Ascending aorta (tissue), 2 donors: ENCODE measurements at regions of chr10 and their contacts with region 1.

Region 1: DNA sequence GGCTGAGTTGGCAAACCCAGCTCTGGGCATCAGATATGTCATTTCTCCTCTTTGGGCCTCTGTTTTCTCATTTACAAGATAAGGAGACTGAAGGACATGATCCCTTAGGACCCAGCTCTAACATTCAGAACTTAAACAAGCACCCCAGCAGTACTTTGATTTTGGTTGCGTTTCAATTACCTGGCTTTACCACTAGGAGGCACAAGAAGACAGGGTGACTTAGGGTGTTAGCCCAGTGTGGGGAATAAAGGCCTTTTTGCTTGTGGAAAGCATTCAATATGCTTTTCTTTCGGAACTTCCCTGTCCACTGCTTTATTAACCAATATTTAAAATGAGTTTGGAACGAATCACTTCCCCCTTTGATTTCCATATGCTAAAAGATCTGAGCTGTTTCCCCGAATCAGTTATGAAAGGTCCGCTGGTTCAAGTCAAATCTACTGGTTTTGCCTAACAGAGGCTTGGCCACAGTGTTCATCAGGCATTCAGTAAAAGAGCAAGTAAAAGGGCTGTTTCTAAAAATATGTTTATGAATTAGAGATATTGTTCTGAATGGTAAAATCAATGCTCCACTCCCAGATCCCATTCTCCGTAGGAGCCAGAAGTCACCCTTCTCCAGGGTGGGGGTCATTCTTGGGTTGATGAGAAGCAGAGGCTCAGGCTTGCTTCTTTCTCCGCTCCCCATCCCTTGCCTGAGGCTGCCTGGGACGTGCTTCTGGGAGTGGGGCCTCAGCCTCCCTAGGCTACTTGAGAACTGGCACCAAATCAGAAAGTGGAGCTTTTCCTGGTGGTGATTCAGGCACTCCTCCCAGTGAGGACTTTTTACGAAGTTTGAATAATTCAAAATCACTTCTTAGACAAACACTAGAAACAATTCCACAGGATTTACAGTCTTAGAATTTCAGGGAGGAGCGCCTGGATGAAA is 105.5 kb downstream of the MYOF start:
- DNase-seq: peak in 1 of 2 donors; percentile 82
- H3K4me3 ChIP-seq: peak overlapping the region in 1 of 2 donors; percentile 39
- H3K27ac ChIP-seq: peak overlapping the region; percentile 78 to 92
- H3K4me1 ChIP-seq: peaks cover 4 to 26% of the 10 kb centered on the region in 2 donors
- H3K27me3 ChIP-seq: no peaks in the 10 kb centered on the region
- CTCF ChIP-seq: peak; percentile 91 to 96 (median 96)

Region 2: GRCh38 chr10:93074147-93074596 is 302.5 kb before region 1 on chr10:
- intact Hi-C with region 1: no loop called
- DNase-seq: no peak
- H3K4me3 ChIP-seq: peak overlapping the region; percentile 47 to 66
- H3K27ac ChIP-seq: no peak overlapping the region
- H3K4me1 ChIP-seq: peaks cover 13 to 28% of the 10 kb centered on the region in 2 donors
- H3K27me3 ChIP-seq: peaks cover 15% of the 10 kb centered on the region
- CTCF ChIP-seq: no peak

Region 3: GRCh38 chr10:93420091-93420490 is 43.5 kb after region 1 on chr10:
- intact Hi-C with region 1: loop called (anchors 1 kb)
- DNase-seq: no peak
- H3K4me3 ChIP-seq: no peak overlapping the region
- H3K27ac ChIP-seq: peak overlapping the region; percentile 72 to 82
- H3K4me1 ChIP-seq: peaks cover 18 to 33% of the 10 kb centered on the region in 2 donors
- H3K27me3 ChIP-seq: no peaks in the 10 kb centered on the region
- CTCF ChIP-seq: no peak

Region 4: DNA sequence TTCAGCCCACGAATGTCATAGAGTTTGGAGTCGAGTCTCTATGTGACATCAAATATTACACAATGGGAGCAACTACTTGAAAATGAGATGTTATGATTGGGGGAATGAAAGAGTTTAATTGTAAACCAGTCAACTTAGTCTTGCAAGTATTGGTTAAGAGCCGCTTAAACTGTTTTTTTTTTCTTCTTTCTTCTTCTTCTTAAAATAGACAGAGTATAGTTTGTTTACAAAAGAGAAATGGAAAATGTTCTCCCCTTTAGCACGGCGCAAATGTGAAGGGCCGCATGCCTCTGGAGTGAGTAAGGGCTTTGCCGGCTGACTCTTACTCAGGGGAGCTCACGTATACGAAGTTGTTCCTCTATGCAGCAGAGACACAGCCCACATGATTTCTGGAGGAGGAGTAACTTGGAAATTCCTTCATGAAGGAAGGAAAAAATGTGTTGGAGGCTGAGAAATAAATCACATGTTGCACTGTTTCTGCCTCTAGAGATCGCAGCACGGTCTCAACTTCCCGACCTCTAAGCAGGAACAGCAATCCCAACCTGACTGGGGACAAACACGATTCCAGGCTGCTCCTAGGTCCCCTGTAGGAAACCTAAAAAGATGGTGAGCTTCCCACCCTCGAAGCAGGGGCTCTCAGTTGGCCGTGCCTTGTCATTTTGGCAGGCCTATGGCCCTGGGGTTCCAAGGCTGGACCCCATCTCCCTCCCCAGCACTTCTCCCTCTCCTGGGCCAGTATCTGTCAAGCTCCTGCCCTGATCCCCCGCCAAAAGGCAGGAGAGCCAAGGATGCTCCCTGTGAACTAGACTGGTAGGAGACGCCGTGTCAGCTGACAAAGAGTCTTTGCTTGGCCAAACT is 60.7 kb after region 1 on chr10:
- intact Hi-C with region 1: loop called (anchors 2 kb)
- DNase-seq: peak; percentile 72 to 96
- H3K4me3 ChIP-seq: peak overlapping the region; percentile 29 to 46
- H3K27ac ChIP-seq: peak overlapping the region; percentile 96 to 98
- H3K4me1 ChIP-seq: peaks cover 34 to 85% of the 10 kb centered on the region in 2 donors
- H3K27me3 ChIP-seq: no peaks in the 10 kb centered on the region
- CTCF ChIP-seq: no peak

Region 5: GRCh38 chr10:93482145-93482834 is 105.7 kb after region 1 on chr10 and contains the start of gene MYOF:
- intact Hi-C with region 1: loop called (anchors 1 kb)
- DNase-seq: peak in 1 of 2 donors; percentile 83
- H3K4me3 ChIP-seq: peak within 1 kb of the TSS; percentile 62 to 69
- H3K27ac ChIP-seq: peak within 1 kb of the TSS; percentile 83 to 88
- H3K4me1 ChIP-seq: peaks cover 2 to 25% of the 10 kb centered on the region in 2 donors
- H3K27me3 ChIP-seq: no peaks in the 10 kb centered on the region
- CTCF ChIP-seq: peak; percentile 37 to 64 (median 61)
- total RNA-seq, gene MYOF: 68.2 TPM

Region 6: GRCh38 chr10:93496322-93497041 is 119.8 kb after region 1 on chr10 and contains the start of gene CEP55:
- intact Hi-C with region 1: loop called (anchors 1 kb)
- DNase-seq: peak; percentile 74 to 96
- H3K4me3 ChIP-seq: peak within 1 kb of the TSS; percentile 72 to 86
- H3K27ac ChIP-seq: peak within 1 kb of the TSS; percentile 60 to 62
- H3K4me1 ChIP-seq: peaks cover 2 to 5% of the 10 kb centered on the region in 2 donors
- H3K27me3 ChIP-seq: no peaks in the 10 kb centered on the region
- CTCF ChIP-seq: no peak
- total RNA-seq, gene CEP55: not detected

Region 7: GRCh38 chr10:93509816-93510215 is 133.2 kb after region 1 on chr10:
- intact Hi-C with region 1: loop called (anchors 2 kb)
- DNase-seq: no peak
- H3K4me3 ChIP-seq: no peak overlapping the region
- H3K27ac ChIP-seq: no peak overlapping the region
- H3K4me1 ChIP-seq: peaks cover 4 to 8% of the 10 kb centered on the region in 2 donors
- H3K27me3 ChIP-seq: no peaks in the 10 kb centered on the region
- CTCF ChIP-seq: no peak

Region 8: GRCh38 chr10:94645285-94645684 is 1268.7 kb after region 1 on chr10:
- intact Hi-C with region 1: no loop called
- DNase-seq: no peak
- H3K4me3 ChIP-seq: no peak overlapping the region
- H3K27ac ChIP-seq: no peak overlapping the region
- H3K4me1 ChIP-seq: no peaks in the 10 kb centered on the region
- H3K27me3 ChIP-seq: no peaks in the 10 kb centered on the region
- CTCF ChIP-seq: no peak